ENCODE measurements at regions of chr15 and their contacts with region 1.

Region 1: DNA sequence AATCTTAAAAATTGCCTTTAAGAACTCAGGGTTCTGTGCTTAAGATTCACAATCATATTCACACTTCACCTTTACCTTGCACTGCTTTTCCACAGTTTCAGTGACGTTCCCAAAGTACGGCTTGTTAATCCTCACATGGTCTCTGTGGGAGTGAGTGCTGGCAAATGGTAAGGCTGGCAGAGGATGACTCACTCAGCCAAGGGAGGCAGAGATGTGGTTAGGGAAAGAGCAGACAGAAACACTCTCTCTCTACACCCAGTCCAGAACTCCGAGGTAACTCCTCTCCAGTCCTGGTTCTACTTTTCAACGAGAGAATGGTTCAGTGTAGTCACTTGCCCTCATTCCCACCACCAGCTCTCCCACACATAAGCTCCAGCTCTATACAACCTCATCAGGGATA is 33.1 kb downstream of the RASGRP1 start:
- DNase-seq: no peak
- ATAC-seq: no peak
- H3K4me3 ChIP-seq: no peak overlapping the region
- H3K4me3 Mint-ChIP-seq: no peak overlapping the region
- H3K27ac ChIP-seq: no peak overlapping the region
- H3K27ac Mint-ChIP-seq: peak overlapping the region; percentile 17 to 82
- H3K4me1 ChIP-seq: peaks cover 29% of the 10 kb centered on the region
- H3K4me1 Mint-ChIP-seq: peaks cover 90 to 94% of the 10 kb centered on the region in 2 donors
- H3K27me3 ChIP-seq: no peaks in the 10 kb centered on the region
- H3K27me3 Mint-ChIP-seq: no peaks in the 10 kb centered on the region
- CTCF ChIP-seq: no peak

Region 2: GRCh38 chr15:37860896-37861295 is 670.6 kb before region 1 on chr15:
- intact Hi-C with region 1: no loop called
- DNase-seq: no peak
- ATAC-seq: no peak
- H3K4me3 ChIP-seq: no peak overlapping the region
- H3K4me3 Mint-ChIP-seq: no peak overlapping the region
- H3K27ac ChIP-seq: no peak overlapping the region
- H3K27ac Mint-ChIP-seq: no peak overlapping the region
- H3K4me1 ChIP-seq: no peaks in the 10 kb centered on the region
- H3K4me1 Mint-ChIP-seq: no peaks in the 10 kb centered on the region
- H3K27me3 ChIP-seq: no peaks in the 10 kb centered on the region
- H3K27me3 Mint-ChIP-seq: no peaks in the 10 kb centered on the region
- CTCF ChIP-seq: no peak

Region 3: DNA sequence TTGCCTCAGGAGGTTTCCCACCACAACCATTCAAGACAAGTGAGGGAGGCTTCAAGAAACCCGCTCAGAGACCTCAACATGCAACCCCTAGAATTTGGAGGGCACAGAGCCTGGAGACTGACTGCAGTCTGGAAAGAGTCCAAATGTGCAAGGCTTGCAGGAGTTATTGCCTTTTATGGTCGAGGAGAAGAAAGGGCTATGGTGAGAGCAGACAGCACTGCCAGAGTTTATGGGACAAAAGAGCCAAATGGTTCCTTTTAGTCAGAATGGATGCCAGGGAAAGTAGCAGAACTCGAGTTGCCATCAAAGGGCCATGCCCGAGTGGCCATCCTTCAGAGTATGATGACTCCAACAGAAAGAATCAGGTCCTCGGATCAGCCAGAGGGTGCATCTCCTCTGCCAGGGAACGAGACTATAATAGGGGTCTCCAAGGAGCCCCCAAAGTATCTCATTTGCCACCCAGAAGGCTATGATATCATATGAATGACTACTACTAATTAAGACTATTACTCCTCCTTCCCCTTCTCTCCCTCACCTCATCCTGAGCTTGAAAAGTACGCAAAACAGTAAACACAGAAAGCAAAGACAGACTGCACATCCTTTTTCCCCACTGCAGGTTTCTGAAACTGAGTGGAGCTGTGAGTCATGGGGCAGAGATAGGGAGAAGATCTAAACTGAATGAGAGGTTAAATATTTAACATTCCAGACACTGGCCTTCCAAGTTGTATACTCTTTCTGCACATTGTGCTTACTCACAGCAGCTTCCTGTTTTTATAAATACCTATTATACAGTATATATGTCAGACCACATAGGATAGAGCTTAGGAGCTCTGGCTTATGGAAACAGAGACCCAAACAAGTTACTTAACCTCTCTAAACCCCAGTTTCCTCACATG is 630.9 kb before region 1 on chr15:
- intact Hi-C with region 1: no loop called
- DNase-seq: no peak
- ATAC-seq: no peak
- H3K4me3 ChIP-seq: no peak overlapping the region
- H3K4me3 Mint-ChIP-seq: no peak overlapping the region
- H3K27ac ChIP-seq: no peak overlapping the region
- H3K27ac Mint-ChIP-seq: no peak overlapping the region
- H3K4me1 ChIP-seq: no peaks in the 10 kb centered on the region
- H3K4me1 Mint-ChIP-seq: no peaks in the 10 kb centered on the region
- H3K27me3 ChIP-seq: no peaks in the 10 kb centered on the region
- H3K27me3 Mint-ChIP-seq: peaks cover 6 to 18% of the 10 kb centered on the region in 2 donors
- CTCF ChIP-seq: no peak

Region 4: DNA sequence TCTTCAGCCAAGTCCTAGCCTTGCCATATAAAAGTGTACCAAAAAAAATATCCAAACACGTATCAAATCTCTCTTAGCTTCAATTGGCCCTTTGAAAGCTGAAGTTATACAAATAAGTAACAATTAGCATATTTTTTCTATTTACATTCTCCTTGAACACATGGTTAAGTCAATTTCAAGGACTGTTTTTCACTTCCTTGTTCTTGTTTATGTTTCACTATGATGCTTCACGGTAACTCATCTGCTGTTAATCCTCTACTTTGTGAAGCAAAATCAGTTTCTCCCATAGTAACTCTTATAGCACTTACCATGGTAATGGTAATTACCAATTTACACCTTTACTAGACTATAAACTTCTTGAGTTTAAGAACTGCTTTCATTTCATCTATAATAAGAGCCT is 289.5 kb before region 1 on chr15:
- intact Hi-C with region 1: no loop called
- DNase-seq: no peak
- ATAC-seq: no peak
- H3K4me3 ChIP-seq: no peak overlapping the region
- H3K4me3 Mint-ChIP-seq: no peak overlapping the region
- H3K27ac ChIP-seq: no peak overlapping the region
- H3K27ac Mint-ChIP-seq: no peak overlapping the region
- H3K4me1 ChIP-seq: no peaks in the 10 kb centered on the region
- H3K4me1 Mint-ChIP-seq: no peaks in the 10 kb centered on the region
- H3K27me3 ChIP-seq: peaks cover 4% of the 10 kb centered on the region
- H3K27me3 Mint-ChIP-seq: peaks cover 14 to 63% of the 10 kb centered on the region in 2 donors
- CTCF ChIP-seq: no peak

Region 5: DNA sequence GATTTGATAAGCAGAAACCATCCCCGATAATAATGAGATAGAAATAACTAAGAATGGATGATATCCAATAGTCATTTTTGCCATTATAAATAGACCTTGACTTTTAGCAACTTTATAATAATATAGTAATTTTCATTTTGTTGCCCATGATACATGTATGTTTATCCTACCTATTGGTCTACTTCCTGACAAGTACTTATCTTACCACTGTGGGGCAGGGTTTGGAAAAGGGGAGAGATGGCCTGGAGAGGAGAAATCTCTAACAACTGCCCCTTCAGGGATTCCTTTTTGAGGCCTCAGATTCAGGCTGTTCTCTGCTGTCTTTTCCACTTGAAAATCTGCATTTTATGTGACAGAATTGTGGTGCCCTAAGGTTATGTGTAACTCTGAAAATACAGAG is 35.4 kb before region 1 on chr15:
- intact Hi-C with region 1: loop called (anchors 5 kb)
- DNase-seq: no peak
- ATAC-seq: no peak
- H3K4me3 ChIP-seq: no peak overlapping the region
- H3K4me3 Mint-ChIP-seq: no peak overlapping the region
- H3K27ac ChIP-seq: no peak overlapping the region
- H3K27ac Mint-ChIP-seq: peak overlapping the region; percentile 58 to 78
- H3K4me1 ChIP-seq: no peaks in the 10 kb centered on the region
- H3K4me1 Mint-ChIP-seq: peaks cover 13 to 14% of the 10 kb centered on the region in 2 donors
- H3K27me3 ChIP-seq: no peaks in the 10 kb centered on the region
- H3K27me3 Mint-ChIP-seq: no peaks in the 10 kb centered on the region
- CTCF ChIP-seq: no peak

Region 6: DNA sequence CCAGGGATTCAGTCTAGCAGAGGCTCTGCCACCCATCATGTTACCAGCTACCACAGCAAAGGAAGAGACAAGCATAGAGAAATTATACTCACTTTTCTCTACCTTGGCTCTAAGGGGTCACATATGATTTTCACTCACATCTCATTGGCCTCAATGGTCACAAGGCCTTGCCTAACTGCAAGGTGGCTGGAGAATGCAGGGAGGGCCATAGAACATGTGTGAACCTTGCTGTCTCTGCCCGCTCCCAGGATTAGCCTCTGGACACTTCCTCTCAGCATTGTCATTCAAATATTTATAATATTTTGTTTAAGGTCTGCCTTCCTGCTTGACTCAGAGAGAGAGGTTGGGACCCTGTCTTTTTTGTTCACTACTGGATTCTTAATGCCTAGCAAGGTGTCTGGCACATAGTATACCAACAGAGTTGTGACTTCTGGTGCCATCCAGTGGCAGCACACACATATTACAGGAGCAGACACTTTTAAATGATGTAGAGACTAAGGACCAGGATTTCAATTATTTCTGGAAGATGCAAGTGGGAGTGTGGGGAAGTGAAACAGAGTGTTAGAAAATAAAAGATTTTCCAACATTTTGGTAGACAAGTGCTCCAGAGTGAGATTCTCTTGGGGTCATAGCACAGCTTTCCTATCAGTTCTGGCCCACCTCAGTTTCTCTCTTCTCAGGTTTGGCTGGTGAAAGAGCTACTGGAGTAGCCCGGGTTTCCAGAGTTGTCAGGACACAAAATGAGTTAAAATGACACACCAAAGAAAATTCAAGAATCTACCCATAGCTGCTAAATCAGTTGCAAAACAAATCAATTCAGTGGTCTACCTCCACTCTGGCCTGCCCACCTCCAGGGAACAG is 152.1 kb after region 1 on chr15:
- intact Hi-C with region 1: no loop called
- DNase-seq: peak; percentile 58 to 90
- ATAC-seq: peak; percentile 89 to 98 (median 97)
- H3K4me3 ChIP-seq: no peak overlapping the region
- H3K4me3 Mint-ChIP-seq: peak overlapping the region; percentile 7
- H3K27ac ChIP-seq: no peak overlapping the region
- H3K27ac Mint-ChIP-seq: peak overlapping the region; percentile 41 to 80
- H3K4me1 ChIP-seq: peaks cover 46% of the 10 kb centered on the region
- H3K4me1 Mint-ChIP-seq: peaks cover 41 to 43% of the 10 kb centered on the region in 2 donors
- H3K27me3 ChIP-seq: no peaks in the 10 kb centered on the region
- H3K27me3 Mint-ChIP-seq: no peaks in the 10 kb centered on the region
- CTCF ChIP-seq: peak; percentile 90

Measured in natural killer cell (primary cell).